Heart left ventricle (tissue), 16 donors: ENCODE measurements at regions of chr21 and their contacts with region 1.

Region 1: DNA sequence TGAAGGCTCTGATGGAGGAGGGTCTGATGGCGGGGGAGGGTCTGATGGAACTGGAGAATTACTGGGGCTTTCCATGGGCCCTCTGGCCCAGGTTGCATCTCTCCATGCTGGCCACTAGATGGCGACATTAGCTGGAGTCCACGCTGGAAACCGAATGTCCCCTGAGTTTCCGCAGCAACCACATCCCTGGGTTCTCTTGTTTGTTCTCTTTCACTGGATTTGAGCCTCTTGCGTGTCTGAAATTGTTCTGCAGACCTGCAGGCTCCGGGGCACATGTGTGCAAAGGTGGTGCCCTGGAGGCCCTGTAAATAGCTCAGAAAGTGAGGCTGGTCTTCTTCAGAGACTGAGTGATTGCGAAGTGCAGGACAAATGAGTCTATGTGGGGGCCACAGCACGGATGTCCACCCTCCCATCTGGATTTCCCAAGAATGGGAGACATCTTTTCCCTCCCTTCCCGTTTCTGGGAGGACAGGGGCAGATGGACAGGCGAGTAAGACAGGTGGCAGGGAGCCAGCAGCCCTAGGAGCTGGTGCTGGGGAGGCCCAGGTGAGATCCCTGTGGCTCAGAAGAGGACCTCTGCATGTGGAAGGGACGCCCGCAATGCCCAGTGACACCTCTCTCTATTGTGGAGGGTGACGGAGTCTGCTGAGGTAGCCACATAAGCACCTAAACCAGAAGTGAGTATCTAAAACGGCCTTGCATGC is 73.2 kb upstream of the ABCG1 start:
- DNase-seq: peak; percentile 33 to 73 (median 56)
- ATAC-seq: peak; percentile 58 to 68 (median 68)
- H3K4me3 ChIP-seq: no peak overlapping the region
- H3K27ac ChIP-seq: no peak overlapping the region
- H3K4me1 ChIP-seq: peaks cover 0 to 5% (median 1%) of the 10 kb centered on the region in 12 donors
- H3K27me3 ChIP-seq: no peaks in the 10 kb centered on the region
- CTCF ChIP-seq: peak; percentile 81 to 96 (median 91)
- POLR2A ChIP-seq: no peak

Region 2: DNA sequence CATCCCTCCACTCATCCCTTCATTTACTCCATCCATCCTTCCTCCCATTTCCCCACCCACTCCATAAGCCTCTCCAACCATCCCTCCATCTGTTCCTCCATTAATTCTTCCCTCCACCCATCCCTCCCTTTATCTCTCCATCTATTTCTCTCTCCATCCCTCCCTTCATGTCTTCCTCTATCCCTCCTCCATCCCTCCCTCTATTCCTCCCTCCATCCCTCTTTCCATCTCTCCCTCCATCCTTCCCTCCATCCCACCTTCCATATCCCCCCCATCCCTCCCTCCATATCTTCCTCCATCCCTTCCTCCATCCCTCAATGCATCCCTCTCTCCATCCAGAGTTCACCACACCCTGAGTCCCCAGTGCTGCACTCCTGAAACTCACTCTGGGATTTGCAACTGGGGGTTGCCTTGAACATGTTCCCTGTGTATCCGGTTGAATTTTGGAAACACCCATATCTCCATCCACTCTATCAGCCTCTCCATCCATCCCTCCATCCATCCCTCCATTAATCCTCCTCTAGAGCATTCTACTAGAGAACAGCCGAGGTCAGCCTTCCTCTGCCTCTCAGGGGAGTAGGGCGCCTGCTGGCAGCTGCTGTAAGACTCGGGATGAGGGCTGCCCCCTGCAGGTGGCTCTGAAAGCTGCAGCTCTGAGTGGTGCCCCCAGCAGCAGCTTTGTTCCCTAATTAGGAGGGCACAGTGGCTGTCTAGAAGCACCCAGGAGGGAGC is 112.6 kb after region 1 on chr21:
- intact Hi-C with region 1: loop called in 8 of 10 experiments (anchors 5 to 10 kb)
- DNase-seq: peak; percentile 69 to 89 (median 76)
- ATAC-seq: peak; percentile 63 to 75 (median 64)
- H3K4me3 ChIP-seq: no peak overlapping the region
- H3K27ac ChIP-seq: no peak overlapping the region
- H3K4me1 ChIP-seq: peaks cover 2 to 67% (median 30%) of the 10 kb centered on the region in 12 donors
- H3K27me3 ChIP-seq: no peaks in the 10 kb centered on the region
- CTCF ChIP-seq: peak; percentile 69 to 88 (median 78)
- POLR2A ChIP-seq: no peak

Region 3: DNA sequence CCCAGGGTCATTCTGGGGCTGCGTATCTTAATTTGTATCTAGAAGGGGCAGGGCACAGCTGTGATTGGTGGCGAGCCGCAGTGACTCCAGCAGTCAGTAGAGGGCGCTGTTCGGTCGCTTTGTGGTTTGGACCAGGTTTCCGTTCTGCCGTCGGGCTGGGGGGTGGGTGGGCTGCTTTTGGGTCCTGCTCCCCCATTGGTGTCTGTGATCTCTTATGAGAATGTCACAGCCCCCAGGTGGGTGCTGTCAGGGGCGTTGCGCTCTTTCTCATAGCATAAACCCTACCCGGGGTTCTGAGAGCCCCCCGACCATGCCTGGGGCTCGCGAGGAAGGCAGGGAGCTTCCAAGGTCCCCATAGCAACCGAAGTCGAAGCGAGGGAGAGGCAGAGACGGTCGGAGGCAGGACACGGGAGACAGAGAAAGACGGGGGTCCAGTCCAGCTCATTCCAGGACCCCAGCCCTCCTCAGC is 164.1 kb after region 1 on chr21:
- intact Hi-C with region 1: loop called in 1 of 10 experiments (anchors 5 kb)
- DNase-seq: peak in 1 of 5 donors; percentile 52
- ATAC-seq: peak; percentile 6 to 68 (median 48)
- H3K4me3 ChIP-seq: no peak overlapping the region
- H3K27ac ChIP-seq: no peak overlapping the region
- H3K4me1 ChIP-seq: peaks cover 0 to 30% (median 15%) of the 10 kb centered on the region in 12 donors
- H3K27me3 ChIP-seq: peaks cover 0 to 30% (median 3%) of the 10 kb centered on the region in 9 donors
- CTCF ChIP-seq: peak; percentile 58 to 76 (median 71)
- POLR2A ChIP-seq: no peak

Region 4: DNA sequence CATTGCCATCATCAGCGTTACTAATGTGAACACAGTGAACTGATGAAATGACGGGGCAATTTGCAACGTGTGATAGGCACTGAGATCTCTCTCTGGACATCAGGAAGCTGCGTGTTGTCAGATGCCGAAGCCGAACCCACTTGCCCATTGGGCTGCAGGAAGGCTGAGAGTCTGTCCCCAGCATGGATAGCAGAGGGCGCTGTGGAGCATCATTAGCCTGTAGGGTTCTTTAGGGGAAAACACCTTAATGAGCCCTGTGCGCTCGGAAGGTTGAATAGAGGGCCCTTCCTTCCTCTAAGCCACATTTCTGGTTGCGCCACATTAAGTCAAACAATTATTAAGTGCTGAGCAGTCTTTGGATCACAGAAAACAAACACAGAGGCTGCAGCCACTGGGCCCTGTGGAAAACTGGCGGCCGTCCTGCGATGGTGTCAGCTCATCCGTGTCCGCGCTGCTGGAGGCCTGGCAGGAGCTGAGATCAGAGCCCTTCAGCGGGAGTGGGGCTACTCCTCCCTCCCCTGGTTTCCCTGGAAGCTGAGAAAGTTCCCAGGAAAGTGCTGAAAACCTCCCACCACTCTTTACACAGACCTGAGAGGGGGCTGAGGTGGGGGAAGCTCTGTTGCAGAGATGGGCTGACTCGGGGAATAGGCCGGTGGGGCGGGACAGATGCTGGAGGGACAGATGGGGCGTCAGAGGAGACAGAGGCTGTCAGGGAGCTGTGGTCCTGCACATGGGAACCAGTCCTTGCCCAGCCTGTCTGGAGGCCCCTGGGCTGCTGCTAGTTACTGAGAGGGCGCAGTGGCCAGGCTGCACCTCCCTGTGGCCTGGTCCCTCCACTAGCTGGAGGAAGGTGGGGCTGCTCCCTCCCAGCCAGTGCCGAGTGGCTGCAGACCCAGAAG is 192.4 kb after region 1 on chr21:
- intact Hi-C with region 1: loop called in 3 of 10 experiments (anchors 5 to 10 kb)
- DNase-seq: peak in 4 of 5 donors; percentile 47 to 62 (median 56)
- ATAC-seq: peak in 3 of 4 donors; percentile 56 to 86 (median 78)
- H3K4me3 ChIP-seq: no peak overlapping the region
- H3K27ac ChIP-seq: no peak overlapping the region
- H3K4me1 ChIP-seq: peaks cover 0 to 6% (median 0%) of the 10 kb centered on the region in 12 donors
- H3K27me3 ChIP-seq: peaks cover 0 to 26% (median 8%) of the 10 kb centered on the region in 9 donors
- CTCF ChIP-seq: peak; percentile 31 to 68 (median 61)
- POLR2A ChIP-seq: no peak

Region 5: GRCh38 chr21:42381334-42381984 is 235.7 kb after region 1 on chr21:
- intact Hi-C with region 1: loop called in 1 of 10 experiments (anchors 5 kb)
- DNase-seq: no peak
- ATAC-seq: no peak
- H3K4me3 ChIP-seq: no peak overlapping the region
- H3K27ac ChIP-seq: no peak overlapping the region
- H3K4me1 ChIP-seq: no peaks in the 10 kb centered on the region
- H3K27me3 ChIP-seq: peaks cover 0 to 4% (median 0%) of the 10 kb centered on the region in 9 donors
- CTCF ChIP-seq: peak in 10 of 12 donors; percentile 11 to 52 (median 32)
- POLR2A ChIP-seq: no peak

Region 6: DNA sequence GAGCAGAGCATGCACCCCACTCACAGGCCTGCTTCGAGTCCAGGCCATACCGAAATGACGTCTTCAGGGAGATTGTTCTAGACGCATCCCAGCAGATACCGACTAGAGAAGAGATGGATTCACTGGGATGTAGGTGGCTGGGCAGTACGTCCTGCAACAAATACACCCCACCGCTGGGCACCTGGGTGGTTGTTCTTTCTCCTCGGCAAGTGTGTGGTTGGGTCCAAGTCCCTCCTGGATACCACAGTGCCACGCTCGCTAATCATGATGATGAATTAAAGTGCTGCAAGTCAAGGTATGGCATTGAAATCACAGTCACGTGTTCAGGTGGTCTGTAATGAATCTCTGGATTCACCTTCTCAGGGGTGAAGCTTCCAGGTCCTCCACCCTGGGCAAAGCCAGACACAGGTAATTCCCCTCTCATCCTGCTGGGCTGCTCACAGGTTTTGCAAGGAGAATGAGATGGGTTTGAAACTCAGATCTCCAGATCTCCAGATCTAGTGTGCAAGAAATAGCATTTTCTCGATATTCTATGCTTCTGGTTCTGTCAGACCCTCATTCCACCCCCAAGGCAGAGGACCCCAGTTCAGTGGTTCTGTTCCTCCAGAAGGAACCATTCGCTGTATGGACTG is 303.7 kb after region 1 on chr21:
- intact Hi-C with region 1: loop called (anchors 1 to 5 kb)
- DNase-seq: no peak
- ATAC-seq: peak in 1 of 4 donors; percentile 25
- H3K4me3 ChIP-seq: no peak overlapping the region
- H3K27ac ChIP-seq: no peak overlapping the region
- H3K4me1 ChIP-seq: peaks cover 0 to 6% (median 0%) of the 10 kb centered on the region in 12 donors
- H3K27me3 ChIP-seq: peaks cover 0 to 9% (median 0%) of the 10 kb centered on the region in 9 donors
- CTCF ChIP-seq: no peak
- POLR2A ChIP-seq: no peak

Region 7: DNA sequence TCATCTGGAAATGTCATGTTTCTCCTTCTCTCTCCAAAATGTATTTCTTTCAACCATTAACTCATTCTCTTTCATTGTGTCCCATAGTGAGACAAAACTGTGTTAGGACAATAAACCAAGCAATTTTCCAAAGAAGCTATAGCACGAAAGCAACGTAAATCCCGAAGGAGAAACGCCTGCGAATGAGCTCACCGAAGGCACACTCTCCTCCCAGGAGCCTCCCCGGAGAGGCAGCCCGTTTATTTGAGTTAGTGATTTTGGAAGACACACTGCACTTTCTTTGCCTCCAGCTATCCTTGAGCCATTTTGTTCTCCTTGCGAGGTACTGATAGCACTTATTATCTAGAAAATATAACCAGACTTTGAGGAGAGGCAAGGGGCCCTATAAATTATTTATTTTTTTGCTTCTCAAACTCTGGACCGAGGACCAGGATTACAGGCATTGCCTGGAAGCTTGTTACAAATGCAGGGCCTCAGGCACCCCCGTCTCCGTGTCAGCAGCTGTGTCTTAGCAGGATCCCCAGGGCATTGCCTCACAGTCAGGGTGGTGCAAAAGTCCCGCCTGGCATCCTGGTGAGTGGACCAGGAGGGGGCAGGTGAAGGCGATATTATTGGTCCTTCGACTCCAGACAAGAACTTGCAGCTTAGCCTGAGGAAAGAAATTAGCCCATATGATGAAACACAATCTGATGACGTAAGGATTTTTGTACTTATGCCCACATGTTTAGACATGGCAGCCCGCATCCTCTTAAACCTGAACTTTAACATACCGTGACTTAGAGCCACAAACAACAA is 309.3 kb after region 1 on chr21:
- intact Hi-C with region 1: loop called in 4 of 10 experiments (anchors 1 to 2 kb)
- DNase-seq: no peak
- ATAC-seq: no peak
- H3K4me3 ChIP-seq: no peak overlapping the region
- H3K27ac ChIP-seq: no peak overlapping the region
- H3K4me1 ChIP-seq: peaks cover 0 to 6% (median 0%) of the 10 kb centered on the region in 12 donors
- H3K27me3 ChIP-seq: peaks cover 0 to 14% (median 0%) of the 10 kb centered on the region in 9 donors
- CTCF ChIP-seq: no peak
- POLR2A ChIP-seq: no peak